ENCODE measurements at regions of chr17 and their contacts with region 1.

Region 1: DNA sequence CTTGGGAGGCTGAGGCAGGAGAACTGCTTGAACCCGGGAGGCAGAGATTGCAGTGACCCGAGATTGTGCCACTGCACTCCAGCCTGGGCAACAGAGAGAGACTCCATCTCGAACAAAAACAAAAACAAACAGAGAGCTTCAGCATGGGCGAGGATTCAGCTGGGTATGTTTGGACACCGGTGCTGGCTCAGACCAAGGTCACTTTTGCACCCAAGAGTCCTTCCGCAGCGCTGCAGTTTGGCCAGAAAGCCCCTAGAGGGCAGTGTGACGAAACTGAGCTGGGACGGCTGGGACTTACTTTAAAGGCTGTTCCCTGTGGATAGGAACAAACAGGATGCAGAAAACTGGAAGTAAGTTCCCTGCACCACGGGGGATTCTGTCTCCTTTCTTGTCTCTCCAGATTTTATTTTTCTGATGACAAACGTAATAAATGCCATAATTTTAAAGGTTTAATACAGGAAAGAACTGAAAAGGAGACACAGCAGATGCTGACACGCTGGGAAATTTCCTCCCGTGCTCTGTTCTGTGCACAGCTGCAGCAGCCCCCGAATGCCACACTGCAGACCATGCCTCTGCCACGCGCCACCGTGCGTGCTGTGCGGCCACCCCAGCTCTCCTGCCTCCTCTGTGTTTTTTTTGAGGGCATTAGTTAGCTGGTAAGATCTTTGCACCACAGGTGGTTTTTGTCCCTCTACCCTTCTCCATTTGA is 25.2 kb upstream of the USP36 start:
- DNase-seq: peak; percentile 82 to 92 (median 91)
- H3K4me3 ChIP-seq: no peak overlapping the region
- H3K27ac ChIP-seq: peak overlapping the region in 1 of 2 donors; percentile 18
- H3K4me1 ChIP-seq: peaks cover 9% of the 10 kb centered on the region
- H3K27me3 ChIP-seq: no peaks in the 10 kb centered on the region
- CTCF ChIP-seq: peak; percentile 81 to 89 (median 88)
- EP300 ChIP-seq: no peak
- POLR2A ChIP-seq: no peak

Region 2: GRCh38 chr17:78899361-78900260 is 33.8 kb after region 1 on chr17:
- intact Hi-C with region 1: loop called in 1 of 4 experiments (anchors 5 kb)
- DNase-seq: peak in 1 of 5 donors; percentile 55
- H3K4me3 ChIP-seq: no peak overlapping the region
- H3K27ac ChIP-seq: no peak overlapping the region
- H3K4me1 ChIP-seq: peaks cover 41% of the 10 kb centered on the region
- H3K27me3 ChIP-seq: no peaks in the 10 kb centered on the region
- CTCF ChIP-seq: no peak
- EP300 ChIP-seq: no peak
- POLR2A ChIP-seq: no peak

Region 3: DNA sequence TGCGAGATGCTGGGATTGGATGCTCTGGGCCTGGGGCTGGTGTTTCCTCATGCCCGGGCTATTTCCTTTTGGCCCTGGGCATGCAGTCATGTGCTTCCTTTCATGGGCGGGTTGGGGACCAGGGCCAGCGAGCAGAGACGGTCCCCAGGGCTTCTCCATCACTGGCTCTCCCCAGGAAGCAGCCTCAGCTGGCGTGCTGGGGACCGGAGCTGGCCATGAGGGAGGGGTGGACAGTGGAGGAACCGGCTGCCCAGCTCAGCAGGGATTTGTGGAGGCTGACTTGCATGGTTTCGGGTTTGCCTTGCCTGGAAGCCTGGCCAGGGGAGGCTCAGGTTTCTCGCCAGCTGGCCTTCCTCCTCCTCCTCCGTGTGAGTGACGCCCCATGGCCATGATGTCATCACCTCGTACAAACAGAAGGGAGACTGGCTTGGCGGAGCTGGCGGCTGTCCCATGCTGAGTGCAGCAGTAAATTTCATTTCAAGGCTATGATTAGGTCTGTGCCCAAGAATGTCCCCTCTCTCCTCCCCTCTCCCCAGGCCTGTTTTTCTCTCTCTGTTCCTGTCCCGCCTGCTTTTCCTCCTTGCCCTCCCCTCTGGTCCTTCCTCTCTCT is 68.2 kb after region 1 on chr17:
- intact Hi-C with region 1: loop called in 1 of 4 experiments (anchors 10 kb)
- DNase-seq: peak; percentile 98 to 99 (median 99)
- H3K4me3 ChIP-seq: peak overlapping the region; percentile 16
- H3K27ac ChIP-seq: peak overlapping the region; percentile 79 to 96
- H3K4me1 ChIP-seq: peaks cover 26% of the 10 kb centered on the region
- H3K27me3 ChIP-seq: no peaks in the 10 kb centered on the region
- CTCF ChIP-seq: no peak
- EP300 ChIP-seq: peak; percentile 53
- POLR2A ChIP-seq: no peak

Region 4: DNA sequence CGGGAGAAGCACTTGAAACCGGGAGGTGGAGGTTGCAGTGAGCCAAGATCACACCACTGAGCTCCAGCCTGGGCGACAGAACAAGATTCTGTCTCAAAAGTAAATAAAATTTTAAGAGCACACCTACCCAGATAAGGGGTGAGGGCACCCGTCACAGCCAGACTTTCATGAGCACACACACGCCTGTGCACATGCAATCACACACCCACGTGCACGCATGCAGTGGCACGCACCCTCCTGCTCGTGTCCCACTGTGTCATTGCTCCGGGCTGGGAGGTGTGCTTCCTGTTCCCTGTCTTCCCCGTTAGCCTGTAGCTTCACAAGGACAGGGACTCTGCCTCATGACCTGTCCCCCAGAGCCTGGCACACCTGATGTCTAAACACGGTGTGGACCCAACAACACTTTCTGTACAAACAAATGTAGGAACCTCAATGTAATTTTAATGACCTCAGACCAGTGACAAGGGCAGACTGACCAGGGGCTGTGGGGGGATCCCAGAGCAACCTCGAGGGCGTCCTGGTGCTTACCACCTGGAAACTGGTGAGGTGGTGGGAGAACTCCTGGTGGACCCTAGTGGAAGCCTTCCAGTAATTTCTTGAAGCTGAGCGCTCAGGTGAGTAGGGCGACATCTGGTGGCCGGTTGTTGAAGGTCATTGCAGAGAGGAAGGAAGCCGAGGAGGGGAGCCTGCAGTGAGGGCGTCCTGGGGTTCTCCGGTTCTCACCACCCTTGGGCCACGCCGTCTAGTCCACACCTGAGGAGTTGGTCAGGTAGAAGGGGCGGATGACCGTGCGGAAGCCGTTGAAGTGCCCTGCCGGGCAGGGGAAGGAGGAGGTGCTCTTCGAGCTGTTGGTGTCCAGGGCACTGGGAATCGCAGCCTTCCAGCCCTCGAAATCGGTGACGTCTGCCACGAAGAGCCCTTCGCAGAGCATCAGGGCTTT is 105.3 kb after region 1 on chr17:
- intact Hi-C with region 1: loop called (anchors 2 to 5 kb)
- DNase-seq: peak; percentile 81 to 91 (median 89)
- H3K4me3 ChIP-seq: no peak overlapping the region
- H3K27ac ChIP-seq: peak overlapping the region; percentile 1 to 66
- H3K4me1 ChIP-seq: peaks cover 13% of the 10 kb centered on the region
- H3K27me3 ChIP-seq: no peaks in the 10 kb centered on the region
- CTCF ChIP-seq: peak; percentile 82 to 91 (median 88)
- EP300 ChIP-seq: no peak
- POLR2A ChIP-seq: peak; percentile 10

Measured in ovary (tissue), 10 donors.